Vagina (tissue), 2 donors: ENCODE measurements at regions of chr4 and their contacts with region 1.

Region 1: GRCh38 chr4:15100994-15101695 is 98.9 kb downstream of the CPEB2 start:
- DNase-seq: no peak
- H3K4me3 ChIP-seq: no peak overlapping the region
- H3K27ac ChIP-seq: no peak overlapping the region
- H3K4me1 ChIP-seq: no peaks in the 10 kb centered on the region
- H3K27me3 ChIP-seq: no peaks in the 10 kb centered on the region
- CTCF ChIP-seq: no peak
- POLR2A ChIP-seq: no peak

Region 2: GRCh38 chr4:13248621-13249298 is 1852.4 kb before region 1 on chr4:
- intact Hi-C with region 1: loop called (anchors 5 kb)
- DNase-seq: no peak
- H3K4me3 ChIP-seq: no peak overlapping the region
- H3K27ac ChIP-seq: no peak overlapping the region
- H3K4me1 ChIP-seq: no peaks in the 10 kb centered on the region
- H3K27me3 ChIP-seq: no peaks in the 10 kb centered on the region
- CTCF ChIP-seq: no peak
- POLR2A ChIP-seq: no peak